HCT116 (cell line): ENCODE measurements at regions of chr6 and their contacts with region 1.

Region 1: DNA sequence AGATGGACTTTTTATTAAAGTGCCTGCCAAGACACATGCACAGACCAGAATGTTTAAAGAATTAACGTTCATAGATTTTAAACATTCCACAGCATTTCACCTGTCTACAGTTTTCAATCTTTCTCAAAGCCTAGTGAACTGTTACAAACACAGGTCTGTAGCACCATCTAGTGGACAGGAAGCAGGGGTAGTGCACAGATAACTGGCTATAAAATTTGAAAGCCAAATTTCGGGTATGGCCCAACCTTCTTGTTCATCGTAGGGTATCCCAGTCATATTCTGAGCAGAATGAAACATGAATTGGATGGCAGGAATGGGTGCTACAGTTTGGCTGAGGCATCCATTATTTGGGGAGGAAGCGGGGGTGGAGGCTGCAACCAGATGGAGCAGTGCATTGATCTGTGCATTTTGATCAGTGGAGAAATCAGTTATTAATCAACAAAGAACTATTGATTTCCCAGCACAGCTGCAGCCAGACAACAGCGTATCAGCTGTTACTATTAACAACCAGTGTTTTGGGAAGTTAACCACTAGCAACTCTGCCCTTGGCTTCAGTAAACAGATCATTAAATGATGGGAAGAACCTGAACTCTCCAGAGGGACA is 56.1 kb upstream of the B3GAT2 start:
- DNase-seq: peak; percentile 42
- ATAC-seq: peak; percentile 94
- H3K4me3 ChIP-seq: no peak overlapping the region
- H3K27ac ChIP-seq: no peak overlapping the region
- H3K4me1 ChIP-seq: no peaks in the 10 kb centered on the region
- H3K27me3 ChIP-seq: no peaks in the 10 kb centered on the region; the same call in 1 of the 2 replicates
- CTCF ChIP-seq: peak; percentile 51 to 90 (median 85); a peak in 5 of 6 replicates
- POLR2A ChIP-seq: no peak
- RAD21 ChIP-seq: peak; percentile 68

Region 2: DNA sequence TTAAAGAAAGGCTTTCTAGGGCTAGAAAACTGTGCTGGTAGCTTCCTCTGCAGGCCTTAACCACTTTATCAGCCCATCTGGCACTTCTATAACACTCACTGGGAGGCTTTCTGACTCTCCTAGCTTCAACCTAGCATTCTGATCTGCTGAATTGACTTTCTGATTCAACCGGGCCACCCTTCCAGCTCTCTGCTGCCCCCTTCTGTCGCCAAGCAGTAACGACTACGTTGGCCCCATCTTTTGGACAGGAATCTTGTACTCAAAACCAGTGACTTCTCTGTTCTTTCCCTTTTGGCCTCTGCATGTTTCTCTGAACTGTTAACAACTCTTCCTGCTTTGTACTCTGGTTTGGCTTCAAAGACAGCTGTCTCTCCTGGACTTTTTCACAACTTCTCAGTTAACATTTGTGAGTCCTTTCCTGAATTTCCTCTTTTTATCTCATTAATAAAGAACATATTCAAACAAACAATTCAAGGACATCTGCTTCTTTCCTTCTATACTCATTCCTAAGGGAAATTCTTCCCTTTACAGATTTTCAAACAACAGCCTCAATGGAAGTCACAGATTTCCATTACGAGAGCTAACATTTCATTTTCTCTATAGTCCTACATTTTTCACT is 643.5 kb before region 1 on chr6:
- CTCF ChIA-PET with region 1: no interaction called
- POLR2A ChIA-PET with region 1: no interaction called
- RAD21 ChIA-PET with region 1: no interaction called
- intact Hi-C with region 1: loop called (anchors 2 kb)
- DNase-seq: peak; percentile 54
- ATAC-seq: peak; percentile 92
- H3K4me3 ChIP-seq: no peak overlapping the region
- H3K27ac ChIP-seq: no peak overlapping the region
- H3K4me1 ChIP-seq: peaks cover 0 to 2% of the 10 kb centered on the region in 2 experiments; a peak in 2 of 4 replicates
- H3K27me3 ChIP-seq: peaks cover 53% of the 10 kb centered on the region
- CTCF ChIP-seq: peak; percentile 77 to 93 (median 90); a peak in 5 of 6 replicates
- POLR2A ChIP-seq: no peak
- RAD21 ChIP-seq: peak; percentile 75